Transverse colon (tissue), 4 donors: ENCODE measurements at regions of chr12 and their contacts with region 1.

Region 1: DNA sequence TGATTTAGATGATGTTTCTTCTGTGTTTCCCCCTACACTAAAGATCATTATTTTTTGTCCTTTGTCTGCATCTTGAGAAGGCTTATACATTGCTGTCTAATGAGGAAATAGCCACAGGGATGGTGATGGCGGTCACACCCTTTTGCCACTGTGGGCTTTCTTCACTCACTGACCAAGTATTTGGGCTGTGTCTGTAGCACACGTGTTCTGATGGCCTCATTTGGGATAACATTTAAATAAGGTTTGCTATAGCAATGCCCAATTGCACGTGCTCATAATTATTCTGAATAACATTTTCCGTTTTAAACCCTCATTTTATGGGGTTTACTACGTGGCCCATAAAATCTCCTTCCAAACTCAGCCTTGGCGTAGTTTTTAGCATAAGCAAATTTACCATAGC is 230.3 kb upstream of the PRICKLE1 start:
- DNase-seq: no peak
- H3K4me3 ChIP-seq: no peak overlapping the region
- H3K27ac ChIP-seq: no peak overlapping the region
- H3K4me1 ChIP-seq: no peaks in the 10 kb centered on the region
- H3K27me3 ChIP-seq: no peaks in the 10 kb centered on the region
- CTCF ChIP-seq: no peak
- EP300 ChIP-seq: no peak
- POLR2A ChIP-seq: no peak

Region 2: GRCh38 chr12:40953076-40953475 is 1866.8 kb before region 1 on chr12:
- in situ Hi-C with region 1: no loop called
- intact Hi-C with region 1: loop called (anchors 5 kb)
- DNase-seq: no peak
- H3K4me3 ChIP-seq: no peak overlapping the region
- H3K27ac ChIP-seq: no peak overlapping the region
- H3K4me1 ChIP-seq: peaks cover 0 to 4% (median 0%) of the 10 kb centered on the region in 4 donors
- H3K27me3 ChIP-seq: no peaks in the 10 kb centered on the region
- CTCF ChIP-seq: no peak
- EP300 ChIP-seq: no peak
- POLR2A ChIP-seq: no peak

Region 3: GRCh38 chr12:42023733-42024494 is 795.9 kb before region 1 on chr12:
- in situ Hi-C with region 1: no loop called
- intact Hi-C with region 1: no loop called
- DNase-seq: peak; percentile 64
- H3K4me3 ChIP-seq: peak overlapping the region in 3 of 4 donors; percentile 11 to 38 (median 17)
- H3K27ac ChIP-seq: no peak overlapping the region
- H3K4me1 ChIP-seq: peaks cover 0 to 5% (median 2%) of the 10 kb centered on the region in 4 donors
- H3K27me3 ChIP-seq: peaks cover 7% of the 10 kb centered on the region
- CTCF ChIP-seq: peak; percentile 73 to 91 (median 88)
- EP300 ChIP-seq: no peak
- POLR2A ChIP-seq: no peak